Head of caudate nucleus (tissue), 42 donors: ENCODE measurements at regions of chr2 and their contacts with region 1.

Region 1: GRCh38 chr2:158006961-158007719 is 94.5 kb upstream of the UPP2 start:
- DNase-seq: no peak

Region 2: DNA sequence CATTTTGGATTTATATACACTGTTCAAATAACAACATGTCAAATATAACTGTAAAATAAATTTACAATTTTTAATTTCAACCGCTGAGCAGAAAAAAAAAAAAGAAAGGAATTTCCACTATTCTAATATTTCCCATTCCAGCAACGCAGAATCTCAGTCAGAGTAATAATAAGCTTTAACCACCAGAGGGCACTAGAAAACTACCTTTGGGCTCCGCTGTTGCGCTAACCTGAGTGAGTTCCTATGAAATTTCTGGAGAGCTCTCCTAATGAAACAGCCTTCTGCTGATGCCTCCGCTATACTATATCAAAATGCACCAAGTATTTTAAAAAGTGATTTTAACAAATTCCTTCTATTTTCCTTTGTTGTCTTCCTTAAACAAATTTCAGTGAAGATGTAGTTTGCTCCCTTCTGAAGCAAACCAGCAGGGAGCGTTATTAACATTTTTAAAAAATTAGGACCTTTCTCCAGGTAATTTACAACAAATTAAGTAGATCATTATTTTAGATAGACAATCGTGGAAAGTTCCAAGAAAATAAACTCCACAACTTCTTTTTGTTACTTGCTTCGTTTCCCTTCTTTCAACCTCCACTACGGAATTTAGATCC is 704.5 kb before region 1 on chr2:
- intact Hi-C with region 1: loop called (anchors 10 kb)
- DNase-seq: peak in 27 of 42 donors; percentile 15 to 81 (median 56)

Region 3: DNA sequence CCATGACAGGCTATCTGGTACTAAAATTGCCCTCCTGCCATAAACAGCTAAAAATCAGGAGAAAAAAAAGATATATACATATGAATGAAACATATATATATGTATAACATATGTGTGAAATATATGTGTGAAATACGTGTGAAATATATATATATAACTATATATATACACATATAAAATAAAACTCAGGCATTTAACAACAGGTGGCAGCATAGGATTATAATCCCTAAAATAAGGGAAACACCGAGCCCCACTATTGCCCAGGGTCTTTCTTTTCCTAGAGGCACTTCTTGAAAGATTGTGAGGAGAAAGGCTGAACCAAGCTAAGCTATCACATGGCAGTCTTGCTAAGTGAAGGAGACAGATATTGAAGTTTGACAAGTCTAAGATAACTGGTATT is 497.4 kb before region 1 on chr2:
- intact Hi-C with region 1: loop called (anchors 5 kb)
- DNase-seq: no peak

Region 4: DNA sequence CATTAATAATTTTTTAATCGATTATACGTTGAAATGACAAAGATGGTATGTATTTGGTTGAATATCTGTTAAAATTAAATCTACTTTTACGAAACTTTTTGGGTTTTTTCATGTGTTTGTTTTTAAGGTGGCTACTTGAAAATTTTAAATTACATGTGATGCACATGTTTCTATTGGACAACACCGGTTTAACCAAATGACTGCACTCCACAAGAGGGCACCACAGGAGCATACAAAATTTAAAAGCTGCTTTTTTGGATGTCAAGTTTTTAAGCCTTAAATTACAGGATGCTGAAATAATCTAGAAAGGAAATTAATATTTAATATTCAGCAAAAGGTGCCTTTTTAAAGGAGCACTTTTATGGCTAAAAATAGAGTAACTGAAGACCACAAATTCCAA is 229.7 kb before region 1 on chr2:
- intact Hi-C with region 1: loop called (anchors 5 kb)
- DNase-seq: peak in 37 of 42 donors; percentile 9 to 83 (median 56)

Region 5: DNA sequence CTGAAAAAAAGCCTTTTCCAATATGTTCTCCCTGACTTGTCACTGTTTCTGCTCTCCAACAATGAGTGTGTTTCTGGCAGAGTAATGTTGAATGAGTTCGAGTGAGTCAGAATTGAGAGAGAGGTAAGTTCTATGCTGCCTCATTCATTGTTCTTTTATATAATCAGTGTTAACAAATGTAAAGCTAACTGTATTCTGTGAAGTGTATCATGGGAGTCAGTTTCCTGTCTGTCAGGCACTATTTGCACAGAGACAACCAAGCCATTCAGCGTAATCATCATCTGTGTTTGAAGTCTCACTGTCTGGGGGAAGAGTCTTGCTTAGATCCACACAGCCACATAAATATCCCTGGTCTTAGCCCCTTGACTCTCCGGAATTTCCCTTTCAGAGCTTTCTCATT is 72.5 kb after region 1 on chr2:
- intact Hi-C with region 1: no loop called
- DNase-seq: no peak